ENCODE measurements at regions of chr18 and their contacts with region 1.

Region 1: GRCh38 chr18:3782901-3783300 is 332.9 kb downstream of the TGIF1 start:
- DNase-seq: no peak
- H3K4me3 ChIP-seq: no peak overlapping the region
- H3K4me3 Mint-ChIP-seq: no peak overlapping the region
- H3K27ac ChIP-seq: no peak overlapping the region
- H3K27ac Mint-ChIP-seq: no peak overlapping the region
- H3K4me1 ChIP-seq: no peaks in the 10 kb centered on the region
- H3K4me1 Mint-ChIP-seq: no peaks in the 10 kb centered on the region
- H3K27me3 ChIP-seq: no peaks in the 10 kb centered on the region
- H3K27me3 Mint-ChIP-seq: peaks cover 4 to 38% of the 10 kb centered on the region in 2 donors

Region 2: DNA sequence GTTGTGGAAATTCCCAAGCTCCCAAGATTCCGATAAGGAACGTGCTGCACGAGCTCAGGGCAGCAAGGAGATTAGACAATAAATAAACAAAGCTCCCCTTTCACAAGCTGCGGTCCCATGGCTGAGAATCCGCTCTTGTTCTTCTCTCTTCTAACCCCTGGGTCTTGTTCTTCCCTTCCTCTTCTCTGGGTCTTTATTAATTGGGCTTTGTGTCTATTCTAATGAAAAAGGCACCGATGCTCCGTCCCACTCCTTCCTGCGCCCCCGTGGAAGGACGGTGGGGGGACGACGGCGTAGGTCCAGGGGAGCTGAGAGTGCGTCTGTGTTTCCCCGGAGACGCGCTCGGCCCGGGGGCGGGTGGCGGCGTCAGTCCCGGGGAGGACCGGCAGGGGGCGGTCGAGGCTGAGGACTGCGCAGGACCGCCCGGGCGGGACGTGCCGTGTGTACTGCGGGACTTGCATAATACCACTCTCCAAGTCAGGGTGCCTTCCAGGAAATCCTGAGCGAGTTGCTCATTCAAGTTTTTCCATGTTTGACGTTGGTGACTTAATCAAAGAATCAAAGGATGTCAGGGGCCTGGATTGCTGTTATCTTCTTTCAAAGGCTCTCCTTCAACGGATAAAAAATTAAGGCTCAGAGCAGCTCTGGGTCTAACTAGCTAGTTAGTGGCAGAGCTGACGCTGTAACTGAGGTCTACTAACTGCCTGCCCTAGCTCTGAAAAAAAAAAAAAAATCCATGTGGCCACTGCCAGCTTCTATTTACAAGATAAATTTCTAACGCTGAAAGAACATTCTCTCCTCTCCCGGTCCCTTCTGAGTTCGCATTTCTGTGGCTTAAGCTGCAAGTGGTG is 11.6 kb before region 1 on chr18:
- CTCF ChIA-PET with region 1: interaction called, 12 read pairs
- POLR2A ChIA-PET with region 1: no interaction called
- DNase-seq: peak; percentile 41 to 69 (median 51)
- H3K4me3 ChIP-seq: peak overlapping the region; percentile 21
- H3K4me3 Mint-ChIP-seq: peak overlapping the region in 6 of 7 donors; percentile 29 to 78 (median 58)
- H3K27ac ChIP-seq: no peak overlapping the region
- H3K27ac Mint-ChIP-seq: peak overlapping the region in 1 of 8 donors; percentile 59
- H3K4me1 ChIP-seq: peaks cover 5% of the 10 kb centered on the region
- H3K4me1 Mint-ChIP-seq: peaks cover 9 to 20% (median 16%) of the 10 kb centered on the region in 3 donors
- H3K27me3 ChIP-seq: no peaks in the 10 kb centered on the region
- H3K27me3 Mint-ChIP-seq: peaks cover 6 to 33% of the 10 kb centered on the region in 2 donors

Region 3: GRCh38 chr18:3839481-3840075 is 56.7 kb after region 1 on chr18:
- CTCF ChIA-PET with region 1: no interaction called
- POLR2A ChIA-PET with region 1: no interaction called
- DNase-seq: no peak
- H3K4me3 ChIP-seq: no peak overlapping the region
- H3K4me3 Mint-ChIP-seq: no peak overlapping the region
- H3K27ac ChIP-seq: no peak overlapping the region
- H3K27ac Mint-ChIP-seq: no peak overlapping the region
- H3K4me1 ChIP-seq: no peaks in the 10 kb centered on the region
- H3K4me1 Mint-ChIP-seq: no peaks in the 10 kb centered on the region
- H3K27me3 ChIP-seq: no peaks in the 10 kb centered on the region
- H3K27me3 Mint-ChIP-seq: peaks cover 7 to 12% of the 10 kb centered on the region in 2 donors

Measured in CD8-positive, alpha-beta memory T cell (primary cell).